ENCODE measurements at regions of chr15 and their contacts with region 1.

Region 1: DNA sequence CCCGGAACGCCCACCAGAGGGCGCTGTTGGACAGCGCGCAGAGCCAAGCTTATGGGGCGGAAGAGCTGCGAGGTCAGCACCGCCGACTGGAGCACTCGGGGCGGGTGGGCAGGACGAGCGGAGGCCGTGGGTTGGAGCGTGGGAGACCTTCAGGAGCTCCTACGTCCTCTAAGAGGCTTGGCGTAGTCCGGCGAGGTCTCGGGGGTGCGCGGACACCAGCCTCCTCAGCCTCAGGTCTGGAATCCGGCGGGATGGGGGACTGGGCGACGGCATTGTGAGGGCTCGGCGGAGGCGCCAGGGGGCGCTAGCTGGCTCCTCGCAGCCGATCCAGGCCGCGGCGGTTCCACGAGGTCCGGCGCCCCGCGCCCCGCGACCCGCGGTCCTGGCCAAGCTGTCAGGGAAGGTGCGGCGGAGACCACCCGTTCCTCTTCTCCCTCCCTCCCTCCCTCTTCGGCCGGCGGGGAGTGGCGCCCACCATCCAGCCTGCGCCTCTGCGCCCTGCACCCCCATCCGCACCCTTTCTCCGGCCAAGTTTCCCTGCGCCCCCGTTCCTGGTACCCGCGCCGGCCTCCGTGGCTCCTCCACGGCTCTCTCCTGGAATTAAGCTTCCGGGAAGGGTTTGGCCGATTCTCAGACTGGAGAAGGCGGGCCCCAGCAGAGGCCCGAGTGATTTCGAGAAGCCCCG is 24.3 kb upstream of the POLG start:
- DNase-seq: peak; percentile 85
- ATAC-seq: peak; percentile 93
- H3K4me3 Mint-ChIP-seq: peak overlapping the region; percentile 75
- H3K27ac Mint-ChIP-seq: no peak overlapping the region
- H3K4me1 Mint-ChIP-seq: peaks cover 3% of the 10 kb centered on the region
- H3K27me3 Mint-ChIP-seq: peaks cover 75% of the 10 kb centered on the region
- CTCF ChIP-seq: peak; percentile 97

Region 2: DNA sequence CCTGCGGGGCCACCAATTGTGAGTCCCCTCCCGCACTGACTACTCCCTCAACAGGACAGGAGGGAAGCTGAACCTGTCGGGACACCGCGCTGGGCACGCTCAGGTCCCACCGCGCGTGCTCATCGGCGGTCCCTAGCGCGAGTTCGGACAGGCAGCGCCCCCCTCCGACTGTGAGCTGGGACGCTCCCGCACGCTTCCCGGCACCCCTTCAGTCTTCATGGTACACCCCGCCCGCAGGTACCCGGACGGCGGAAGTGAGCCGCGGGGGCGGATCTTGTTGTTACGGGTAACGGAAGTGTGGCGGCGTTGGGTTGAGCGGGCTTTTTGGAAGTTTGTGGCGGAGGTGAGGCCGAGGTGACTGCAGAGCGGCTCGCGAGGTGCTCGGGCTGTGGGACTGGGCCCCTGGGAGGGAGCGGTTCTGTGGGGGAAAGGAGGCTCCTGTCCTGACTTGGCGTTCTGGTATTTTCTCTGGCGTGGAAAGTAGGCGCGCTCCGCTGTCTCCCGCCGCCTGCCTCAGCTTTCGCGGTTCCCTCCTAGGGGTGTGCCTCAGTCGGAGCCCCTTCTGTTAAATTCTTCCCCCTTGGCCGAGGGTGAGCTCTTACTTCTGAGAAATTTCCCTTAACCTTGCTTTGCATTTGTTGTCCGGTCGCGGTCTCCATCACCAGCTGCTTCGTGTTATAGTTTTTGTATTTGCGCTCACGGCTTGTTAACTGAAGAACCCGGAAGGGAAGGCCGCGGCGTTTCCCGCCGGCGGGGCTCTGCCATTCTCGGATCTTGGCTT is 115.0 kb before region 1 on chr15 and contains the start of gene FANCI:
- CTCF ChIA-PET with region 1: interaction called, 11 read pairs
- POLR2A ChIA-PET with region 1: interaction called, 3 read pairs
- intact Hi-C with region 1: no loop called
- DNase-seq: peak; percentile 99
- ATAC-seq: peak; percentile 96
- H3K4me3 Mint-ChIP-seq: peak within 1 kb of the TSS; percentile 96
- H3K27ac Mint-ChIP-seq: peak within 1 kb of the TSS; percentile 93
- H3K4me1 Mint-ChIP-seq: peaks cover 30% of the 10 kb centered on the region
- H3K27me3 Mint-ChIP-seq: no peaks in the 10 kb centered on the region
- CTCF ChIP-seq: no peak
- total RNA-seq, gene FANCI: 180 TPM

Region 3: DNA sequence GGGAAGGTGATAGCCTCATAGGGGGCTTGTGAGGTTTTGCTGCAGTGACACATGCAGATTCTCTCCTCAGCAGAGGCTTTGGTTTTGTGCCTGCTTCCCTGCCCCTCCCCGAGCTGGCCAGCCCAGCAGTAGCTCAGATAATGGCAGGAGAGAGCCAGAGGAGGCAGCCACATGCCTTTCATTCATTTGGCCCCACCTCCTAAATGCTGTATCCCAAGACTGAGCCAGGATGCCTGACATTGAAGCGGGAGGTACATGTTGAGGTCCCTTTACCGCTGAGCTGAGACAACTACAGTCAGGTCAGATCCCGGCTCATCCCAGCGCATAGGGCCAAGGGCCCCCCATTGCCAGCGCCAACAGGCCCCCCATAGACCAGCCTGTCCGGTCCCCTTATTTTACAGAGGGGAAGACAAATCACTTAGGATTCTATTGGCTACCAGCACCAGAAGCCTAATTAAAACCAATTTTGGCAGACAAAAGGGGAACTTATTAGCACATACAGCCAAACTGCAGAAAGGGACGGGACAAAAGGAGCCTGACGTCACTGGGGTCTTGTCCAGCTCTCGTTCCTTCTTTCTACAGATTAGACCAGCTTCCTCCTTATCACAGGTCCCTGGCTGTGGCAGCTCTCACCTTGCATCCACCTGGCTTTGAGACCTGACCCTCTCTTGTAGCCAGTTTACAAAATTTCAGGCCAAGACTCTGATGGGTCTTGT is 12.2 kb before region 1 on chr15:
- CTCF ChIA-PET with region 1: interaction called, 65 read pairs
- POLR2A ChIA-PET with region 1: no interaction called
- intact Hi-C with region 1: no loop called
- DNase-seq: no peak
- ATAC-seq: no peak
- H3K4me3 Mint-ChIP-seq: no peak overlapping the region
- H3K27ac Mint-ChIP-seq: no peak overlapping the region
- H3K4me1 Mint-ChIP-seq: peaks cover 4% of the 10 kb centered on the region
- H3K27me3 Mint-ChIP-seq: peaks cover 3% of the 10 kb centered on the region
- CTCF ChIP-seq: no peak

Region 4: GRCh38 chr15:89416141-89416853 is 57.4 kb after region 1 on chr15:
- CTCF ChIA-PET with region 1: interaction called, 149 read pairs
- POLR2A ChIA-PET with region 1: interaction called, 3 read pairs
- intact Hi-C with region 1: no loop called
- DNase-seq: peak; percentile 94
- ATAC-seq: peak; percentile 99
- H3K4me3 Mint-ChIP-seq: no peak overlapping the region
- H3K27ac Mint-ChIP-seq: no peak overlapping the region
- H3K4me1 Mint-ChIP-seq: peaks cover 7% of the 10 kb centered on the region
- H3K27me3 Mint-ChIP-seq: peaks cover 77% of the 10 kb centered on the region
- CTCF ChIP-seq: peak; percentile 98

Region 5: DNA sequence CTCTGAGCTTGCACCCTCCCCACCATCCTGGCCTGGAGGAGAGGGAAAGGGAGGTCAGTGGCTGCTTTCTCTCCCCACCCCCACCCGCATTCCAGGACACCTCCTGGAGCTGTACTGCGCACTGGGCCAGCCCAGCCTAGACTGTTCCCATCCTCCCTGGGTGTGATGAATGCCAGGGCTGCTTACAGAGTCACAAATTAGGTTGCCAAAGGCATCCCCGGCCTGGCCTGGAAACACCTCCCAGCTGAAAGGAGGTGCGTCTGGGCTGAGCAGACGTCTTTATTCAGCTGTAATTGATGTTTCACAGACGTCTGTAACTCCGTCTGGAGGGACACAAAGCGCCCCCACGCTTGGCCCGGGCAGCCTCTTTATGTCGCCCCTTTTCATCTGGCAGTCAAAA is 89.9 kb after region 1 on chr15:
- CTCF ChIA-PET with region 1: interaction called, 41 read pairs
- POLR2A ChIA-PET with region 1: no interaction called
- intact Hi-C with region 1: no loop called
- DNase-seq: no peak
- ATAC-seq: no peak
- H3K4me3 Mint-ChIP-seq: no peak overlapping the region
- H3K27ac Mint-ChIP-seq: no peak overlapping the region
- H3K4me1 Mint-ChIP-seq: no peaks in the 10 kb centered on the region
- H3K27me3 Mint-ChIP-seq: peaks cover 43% of the 10 kb centered on the region
- CTCF ChIP-seq: no peak

Region 6: GRCh38 chr15:89514596-89515406 is 155.9 kb after region 1 on chr15:
- CTCF ChIA-PET with region 1: no interaction called
- POLR2A ChIA-PET with region 1: no interaction called
- intact Hi-C with region 1: no loop called
- DNase-seq: no peak
- ATAC-seq: no peak
- H3K4me3 Mint-ChIP-seq: no peak overlapping the region
- H3K27ac Mint-ChIP-seq: no peak overlapping the region
- H3K4me1 Mint-ChIP-seq: no peaks in the 10 kb centered on the region
- H3K27me3 Mint-ChIP-seq: peaks cover 21% of the 10 kb centered on the region
- CTCF ChIP-seq: no peak

Region 7: DNA sequence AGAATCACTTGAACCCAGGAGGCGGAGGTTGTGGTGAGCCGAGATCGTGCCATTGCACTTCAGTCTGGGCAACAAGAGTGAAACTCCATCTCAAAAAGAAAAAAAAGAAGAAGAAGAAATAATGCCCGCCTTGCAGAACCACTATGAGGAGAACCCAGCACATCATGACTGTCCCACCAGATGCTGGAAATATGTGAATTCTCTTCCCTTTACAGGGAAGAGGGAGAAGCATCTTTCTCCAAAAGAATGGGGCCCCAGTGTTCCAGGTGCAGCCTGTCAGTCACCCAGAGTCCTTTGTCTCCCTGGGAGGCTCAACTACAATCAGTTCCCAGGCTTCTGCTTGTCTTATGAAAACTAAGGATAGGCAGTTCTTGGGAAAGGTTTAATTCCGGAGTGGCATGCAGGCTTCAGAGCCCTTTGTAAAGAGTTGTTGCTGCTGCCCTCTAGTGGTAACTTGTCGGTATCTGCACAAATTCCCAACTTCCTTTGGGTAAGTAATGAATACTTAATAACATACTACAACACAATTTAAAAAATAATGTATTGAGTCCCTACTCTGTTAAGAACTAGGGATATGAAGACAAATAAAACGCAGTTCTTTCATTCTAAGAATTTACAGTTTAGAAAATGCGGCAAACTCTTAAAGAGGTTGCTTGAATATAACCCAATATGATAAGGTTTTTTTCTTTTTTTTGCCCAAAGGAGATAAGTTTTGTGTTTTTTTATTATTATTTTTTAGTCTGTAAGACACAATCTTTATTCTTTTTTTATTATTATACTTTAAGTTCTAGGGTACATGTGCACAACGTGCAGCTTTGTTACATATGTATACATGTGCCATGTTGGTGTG is 197.7 kb after region 1 on chr15:
- CTCF ChIA-PET with region 1: interaction called, 11 read pairs
- POLR2A ChIA-PET with region 1: no interaction called
- intact Hi-C with region 1: no loop called
- DNase-seq: peak; percentile 52
- ATAC-seq: no peak
- H3K4me3 Mint-ChIP-seq: no peak overlapping the region
- H3K27ac Mint-ChIP-seq: no peak overlapping the region
- H3K4me1 Mint-ChIP-seq: no peaks in the 10 kb centered on the region
- H3K27me3 Mint-ChIP-seq: peaks cover 1% of the 10 kb centered on the region
- CTCF ChIP-seq: peak; percentile 82

Measured in activated CD8-positive, alpha-beta T cell treated with anti-CD3 and anti-CD28 coated beads for 36 hours (primary cell).